T-cell (primary cell): ENCODE measurements at regions of chr5 and their contacts with region 1.

Region 1: GRCh38 chr5:62326302-62326701 is 20.3 kb downstream of the KIF2A start:
- DNase-seq: no peak
- ATAC-seq: no peak
- H3K4me3 ChIP-seq: no peak overlapping the region
- H3K4me3 Mint-ChIP-seq: peak overlapping the region in 1 of 3 donors; percentile 24
- H3K27ac ChIP-seq: no peak overlapping the region
- H3K27ac Mint-ChIP-seq: peak overlapping the region; percentile 44 to 69
- H3K4me1 ChIP-seq: peaks cover 5 to 30% of the 10 kb centered on the region in 2 experiments
- H3K4me1 Mint-ChIP-seq: peaks cover 79 to 85% (median 81%) of the 10 kb centered on the region in 3 donors
- H3K27me3 ChIP-seq: no peaks in the 10 kb centered on the region
- H3K27me3 Mint-ChIP-seq: no peaks in the 10 kb centered on the region

Region 2: DNA sequence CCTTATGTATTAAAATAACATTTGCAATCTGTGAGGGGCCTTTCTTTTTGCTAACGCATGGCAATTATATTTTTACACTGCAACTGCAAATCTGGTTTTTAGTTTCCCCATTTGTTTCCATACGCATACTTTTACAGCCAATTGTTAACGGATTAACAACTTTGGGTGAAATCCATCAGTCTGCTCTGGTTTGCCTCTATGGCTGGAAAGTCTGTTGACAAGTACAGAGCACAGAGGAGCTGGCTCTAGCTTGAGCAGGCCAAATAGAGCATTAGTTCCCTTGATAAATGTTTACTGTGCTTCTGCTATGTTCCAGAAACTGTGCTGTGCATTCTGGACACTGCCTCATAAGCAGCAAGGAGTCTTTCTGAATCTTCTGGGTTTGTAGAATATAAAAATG is 420.7 kb before region 1 on chr5:
- CTCF ChIA-PET with region 1: no interaction called
- POLR2A ChIA-PET with region 1: no interaction called
- DNase-seq: no peak
- ATAC-seq: no peak
- H3K4me3 ChIP-seq: no peak overlapping the region
- H3K4me3 Mint-ChIP-seq: no peak overlapping the region
- H3K27ac ChIP-seq: no peak overlapping the region
- H3K27ac Mint-ChIP-seq: no peak overlapping the region
- H3K4me1 ChIP-seq: no peaks in the 10 kb centered on the region
- H3K4me1 Mint-ChIP-seq: no peaks in the 10 kb centered on the region
- H3K27me3 ChIP-seq: no peaks in the 10 kb centered on the region
- H3K27me3 Mint-ChIP-seq: no peaks in the 10 kb centered on the region

Region 3: GRCh38 chr5:62608529-62609511 is 282.5 kb after region 1 on chr5:
- CTCF ChIA-PET with region 1: interaction called in 1 of 2 experiments, 12 read pairs
- POLR2A ChIA-PET with region 1: no interaction called
- DNase-seq: no peak
- ATAC-seq: no peak
- H3K4me3 ChIP-seq: no peak overlapping the region
- H3K4me3 Mint-ChIP-seq: no peak overlapping the region
- H3K27ac ChIP-seq: no peak overlapping the region
- H3K27ac Mint-ChIP-seq: peak overlapping the region in 1 of 2 donors; percentile 41
- H3K4me1 ChIP-seq: peaks cover 2 to 7% of the 10 kb centered on the region in 2 experiments
- H3K4me1 Mint-ChIP-seq: peaks cover 0 to 45% (median 17%) of the 10 kb centered on the region in 3 donors
- H3K27me3 ChIP-seq: no peaks in the 10 kb centered on the region
- H3K27me3 Mint-ChIP-seq: no peaks in the 10 kb centered on the region